ENCODE measurements at regions of chr17 and their contacts with region 1.

Region 1: GRCh38 chr17:11997147-11997846 is at the start of gene ZNF18:
- DNase-seq: peak; percentile 96
- H3K4me3 ChIP-seq: peak within 1 kb of the TSS; percentile 86 to 91
- H3K27ac ChIP-seq: peak within 1 kb of the TSS; percentile 80 to 86
- H3K4me1 ChIP-seq: no peaks in the 10 kb centered on the region
- H3K27me3 ChIP-seq: no peaks in the 10 kb centered on the region
- CTCF ChIP-seq: peak in 2 of 4 experiments; percentile 40 to 41
- POLR2A ChIP-seq: peak; percentile 97
- total RNA-seq, gene ZNF18: 11.8 to 13.3 TPM

Region 2: DNA sequence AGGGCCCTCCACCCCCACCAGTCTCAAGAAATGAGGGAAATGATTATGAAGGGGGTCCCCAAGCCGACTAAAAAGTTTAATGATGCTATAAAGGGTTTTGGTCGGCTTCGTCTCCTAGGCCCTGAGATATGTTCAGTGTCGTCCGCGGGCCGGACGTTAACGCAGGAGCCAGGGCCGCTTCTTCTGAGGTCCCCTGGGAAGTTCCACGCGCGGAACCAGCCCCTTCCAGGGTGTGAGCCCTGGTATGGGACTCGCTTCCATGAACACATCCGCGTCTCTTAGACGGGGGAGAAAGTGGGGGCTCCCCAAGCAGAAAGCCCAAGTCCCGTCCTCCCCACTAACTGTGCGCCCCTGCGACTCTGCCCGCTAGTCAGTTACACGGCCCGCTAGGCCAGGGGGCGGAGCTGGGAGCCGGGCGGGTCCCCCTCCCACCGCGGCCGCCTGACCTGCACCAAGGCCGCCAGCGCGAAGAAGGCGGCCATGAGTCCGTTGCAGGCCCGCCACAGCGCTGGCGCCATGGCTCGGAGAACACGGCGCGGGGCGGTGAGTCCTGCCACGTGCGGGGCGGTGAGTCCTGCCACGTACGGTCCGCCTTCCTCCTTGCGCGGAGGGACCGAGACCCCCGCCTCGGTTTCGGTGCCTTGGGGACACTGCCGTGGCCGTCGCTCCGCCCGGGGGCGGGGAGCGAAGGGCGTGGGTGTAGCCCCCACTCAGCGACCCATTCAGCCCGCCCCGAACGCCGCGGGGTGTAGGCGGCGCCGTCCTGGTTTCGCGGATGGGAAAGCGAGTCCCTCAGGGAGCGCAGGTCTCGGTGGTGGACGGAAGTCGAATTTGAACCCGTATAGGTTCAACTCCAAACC is 1267.7 kb before region 1 on chr17 and contains the start of gene TMEM220:
- intact Hi-C with region 1: loop called (anchors 10 kb)
- DNase-seq: peak; percentile 66
- H3K4me3 ChIP-seq: peak within 1 kb of the TSS; percentile 52 to 63
- H3K27ac ChIP-seq: peak within 1 kb of the TSS; percentile 96 to 97
- H3K4me1 ChIP-seq: peaks cover 3% of the 10 kb centered on the region
- H3K27me3 ChIP-seq: no peaks in the 10 kb centered on the region
- CTCF ChIP-seq: no peak
- POLR2A ChIP-seq: peak; percentile 63
- total RNA-seq, gene TMEM220: 18.4 to 30.1 TPM

Region 3: GRCh38 chr17:11296994-11297393 is 700.3 kb before region 1 on chr17:
- intact Hi-C with region 1: no loop called
- DNase-seq: no peak
- H3K4me3 ChIP-seq: no peak overlapping the region
- H3K27ac ChIP-seq: no peak overlapping the region
- H3K4me1 ChIP-seq: no peaks in the 10 kb centered on the region
- H3K27me3 ChIP-seq: no peaks in the 10 kb centered on the region
- CTCF ChIP-seq: peak in 1 of 4 experiments; percentile 46
- POLR2A ChIP-seq: no peak

Region 4: DNA sequence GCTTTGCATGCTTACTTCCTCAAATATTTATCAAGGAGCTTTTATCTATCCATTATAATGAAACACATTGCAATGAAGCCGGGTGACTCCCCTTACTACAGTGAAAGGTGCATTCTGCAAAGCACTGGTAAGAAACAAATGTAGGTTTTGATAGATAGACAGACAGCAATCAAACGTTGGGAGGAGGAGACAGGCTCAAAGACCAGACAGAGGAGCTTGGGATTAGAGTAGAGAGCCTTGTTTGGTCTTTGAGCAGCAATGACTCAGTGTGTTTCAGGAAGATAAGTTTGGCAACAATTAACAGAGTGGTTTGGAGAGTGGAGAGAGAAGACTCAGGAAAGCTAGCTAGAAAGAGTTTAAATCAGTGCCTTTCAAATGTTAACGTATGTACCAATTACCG is 68.9 kb before region 1 on chr17:
- intact Hi-C with region 1: no loop called
- DNase-seq: no peak
- H3K4me3 ChIP-seq: no peak overlapping the region
- H3K27ac ChIP-seq: no peak overlapping the region
- H3K4me1 ChIP-seq: peaks cover 3% of the 10 kb centered on the region
- H3K27me3 ChIP-seq: no peaks in the 10 kb centered on the region
- CTCF ChIP-seq: no peak
- POLR2A ChIP-seq: no peak

Region 5: DNA sequence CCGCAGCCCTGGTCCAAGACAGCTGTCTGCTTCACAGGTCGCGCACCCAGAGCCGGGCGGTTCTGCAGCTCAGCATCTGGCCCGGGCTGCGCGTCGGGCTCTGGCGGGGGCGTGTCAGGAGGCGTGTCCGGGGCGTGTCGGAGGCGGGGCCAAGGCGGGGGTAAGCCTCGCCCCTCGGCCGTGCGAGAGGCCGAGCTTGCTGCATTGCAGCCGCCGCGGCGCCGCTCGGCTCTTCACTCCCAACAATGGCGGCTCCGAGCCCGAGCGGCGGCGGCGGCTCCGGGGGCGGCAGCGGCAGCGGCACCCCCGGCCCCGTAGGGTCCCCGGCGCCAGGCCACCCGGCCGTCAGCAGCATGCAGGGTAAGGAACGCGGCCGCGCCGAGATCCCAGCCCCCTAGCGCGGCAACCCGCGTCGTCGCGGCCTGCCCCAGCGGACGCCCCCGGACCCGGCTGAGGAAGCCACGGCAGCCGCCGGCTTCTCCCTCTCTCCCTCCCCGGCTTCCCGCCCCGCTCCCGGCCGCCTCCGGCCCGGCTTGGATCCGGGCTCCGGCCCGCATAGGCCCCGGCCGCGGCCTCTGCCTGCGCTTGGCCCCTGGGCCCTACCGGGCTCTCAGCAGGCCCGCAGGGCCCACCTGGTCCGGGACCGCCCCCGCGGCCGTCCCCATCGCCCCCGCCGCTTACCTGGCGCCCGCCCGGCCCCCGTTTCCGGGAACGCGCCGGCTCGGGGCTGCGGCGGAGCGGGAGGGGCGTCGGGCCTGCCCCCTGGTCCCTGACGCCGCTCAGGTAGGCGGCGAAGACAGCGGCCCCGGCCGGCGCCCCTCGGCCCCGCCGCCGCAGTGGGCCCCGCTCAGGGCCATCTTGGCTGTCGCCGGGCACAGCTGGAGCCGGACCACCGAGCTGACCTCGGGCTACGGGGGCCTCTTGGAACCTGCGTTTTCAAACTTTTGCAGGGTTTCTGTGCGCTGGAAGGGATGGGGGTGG is 23.6 kb after region 1 on chr17 and contains the start of gene MAP2K4:
- intact Hi-C with region 1: loop called (anchors 2 kb)
- DNase-seq: peak; percentile 91
- H3K4me3 ChIP-seq: peak within 1 kb of the TSS; percentile 97 to 99
- H3K27ac ChIP-seq: peak within 1 kb of the TSS; percentile 83 to 90
- H3K4me1 ChIP-seq: no peaks in the 10 kb centered on the region
- H3K27me3 ChIP-seq: no peaks in the 10 kb centered on the region
- CTCF ChIP-seq: no peak
- POLR2A ChIP-seq: peak; percentile 96
- total RNA-seq, gene MAP2K4: 26.2 to 42.1 TPM

Measured in prostate gland (tissue), 2 donors.